ENCODE measurements at regions of chr19 and their contacts with region 1.

Region 1: GRCh38 chr19:17275461-17276175 is 6.1 kb upstream of the ANKLE1 start:
- DNase-seq: no peak
- ATAC-seq: no peak
- H3K4me3 ChIP-seq: no peak overlapping the region
- H3K27ac ChIP-seq: no peak overlapping the region
- H3K4me1 ChIP-seq: no peaks in the 10 kb centered on the region
- H3K27me3 ChIP-seq: no peaks in the 10 kb centered on the region
- CTCF ChIP-seq: no peak

Region 2: DNA sequence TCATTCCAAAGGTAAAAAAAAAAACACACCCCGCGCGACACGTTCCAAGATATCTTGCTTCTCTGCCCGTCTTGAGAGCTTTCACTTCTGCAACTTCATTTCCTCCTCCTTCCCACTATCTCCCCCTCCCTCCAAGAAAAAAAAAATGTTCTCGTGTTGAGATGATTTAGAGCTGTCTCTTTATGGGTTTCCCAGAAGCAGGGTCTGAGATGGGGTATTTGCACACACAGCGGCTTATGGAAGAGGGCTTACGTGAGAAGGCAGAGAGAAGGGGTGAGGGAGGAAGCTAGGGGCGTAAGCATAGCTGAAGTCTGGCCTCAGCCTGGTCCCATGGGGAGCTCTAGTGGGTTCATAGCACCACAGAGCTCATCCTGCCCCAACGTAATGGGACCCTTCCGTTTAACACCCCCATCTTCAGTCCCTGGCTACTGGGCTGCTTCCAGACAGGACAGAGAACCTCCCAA is 91.7 kb before region 1 on chr19:
- intact Hi-C with region 1: no loop called
- DNase-seq: no peak
- ATAC-seq: peak in 2 of 4 donors; percentile 37 to 69
- H3K4me3 ChIP-seq: no peak overlapping the region
- H3K27ac ChIP-seq: no peak overlapping the region
- H3K4me1 ChIP-seq: no peaks in the 10 kb centered on the region
- H3K27me3 ChIP-seq: no peaks in the 10 kb centered on the region
- CTCF ChIP-seq: no peak

Region 3: DNA sequence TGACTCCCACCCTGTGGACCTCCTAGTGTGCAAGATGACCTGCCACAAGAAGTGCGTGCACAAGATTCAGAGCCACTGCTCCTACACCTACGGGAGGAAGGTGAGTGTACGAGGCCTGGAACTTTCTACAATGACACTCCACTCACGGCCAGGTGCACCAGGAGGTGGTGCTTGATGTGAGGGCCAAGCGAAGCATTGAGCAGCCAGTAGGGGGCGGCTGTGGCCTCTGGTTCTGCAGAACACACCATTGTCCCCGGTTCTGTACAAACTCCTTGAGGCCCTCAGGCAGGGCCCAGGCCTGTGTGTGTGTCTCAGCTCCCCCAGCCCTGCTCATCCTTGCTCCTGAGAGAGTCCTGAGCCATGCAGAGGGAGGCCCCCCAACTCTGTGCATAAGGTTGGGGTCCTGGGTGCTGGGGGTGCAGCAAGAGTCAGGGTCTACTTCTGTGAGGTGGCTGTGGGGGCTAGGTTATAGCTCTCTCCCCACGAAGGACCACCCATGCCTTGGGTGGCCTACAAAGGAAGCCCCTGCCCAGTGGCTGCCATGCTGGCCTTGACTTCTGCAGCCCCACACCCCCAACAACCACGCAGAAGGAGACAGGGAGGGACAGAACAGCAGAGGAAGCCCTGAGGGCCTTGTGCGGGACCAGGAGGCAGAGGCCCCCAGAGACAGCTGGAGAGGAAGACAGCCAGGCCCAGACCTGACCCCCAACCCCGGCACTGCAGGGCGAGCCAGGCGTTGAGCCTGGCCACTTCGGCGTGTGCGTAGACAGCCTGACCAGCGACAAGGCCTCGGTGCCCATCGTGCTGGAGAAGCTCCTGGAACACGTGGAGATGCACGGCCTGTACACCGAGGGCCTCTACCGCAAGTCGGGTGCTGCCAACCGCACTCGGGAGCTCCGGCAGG is 70.1 kb before region 1 on chr19:
- intact Hi-C with region 1: loop called in 1 of 3 experiments (anchors 5 kb)
- DNase-seq: peak; percentile 55 to 86 (median 76)
- ATAC-seq: peak; percentile 76 to 92 (median 89)
- H3K4me3 ChIP-seq: no peak overlapping the region
- H3K27ac ChIP-seq: no peak overlapping the region
- H3K4me1 ChIP-seq: no peaks in the 10 kb centered on the region
- H3K27me3 ChIP-seq: no peaks in the 10 kb centered on the region
- CTCF ChIP-seq: peak; percentile 41 to 64 (median 50)

Measured in pancreas (tissue), 10 donors.